Activated CD4-positive, alpha-beta T cell treated with anti-CD3 and anti-CD28 coated beads, Interleukin-2, amount 10 ng/mL, durations not matched to agents 7 days and 5 days (primary cell): ENCODE measurements at regions of chr12 and their contacts with region 1.

Region 1: DNA sequence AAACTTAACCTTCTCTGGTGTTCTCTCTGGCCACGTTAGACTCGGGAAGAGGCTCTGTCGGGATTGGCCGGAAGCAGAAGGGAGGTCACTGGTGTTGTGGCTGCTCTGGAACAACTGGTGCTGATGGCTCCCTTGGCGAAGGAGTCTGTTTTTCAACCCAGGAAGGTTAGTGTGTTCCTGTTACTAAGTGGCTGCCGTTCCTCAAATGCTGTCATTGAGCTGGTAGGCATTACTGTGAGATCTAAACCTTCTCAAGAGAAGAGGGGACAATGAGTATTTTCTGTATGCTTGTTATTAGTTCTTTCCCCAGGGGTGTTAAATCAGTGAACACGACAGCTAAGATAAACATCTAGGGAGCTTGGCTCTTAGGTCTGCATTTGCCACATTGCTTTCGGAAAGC is 18.3 kb downstream of the POP5 start:
- DNase-seq: no peak
- H3K4me3 Mint-ChIP-seq: no peak overlapping the region
- H3K27ac Mint-ChIP-seq: no peak overlapping the region
- H3K4me1 Mint-ChIP-seq: no peaks in the 10 kb centered on the region
- H3K27me3 Mint-ChIP-seq: no peaks in the 10 kb centered on the region

Region 2: DNA sequence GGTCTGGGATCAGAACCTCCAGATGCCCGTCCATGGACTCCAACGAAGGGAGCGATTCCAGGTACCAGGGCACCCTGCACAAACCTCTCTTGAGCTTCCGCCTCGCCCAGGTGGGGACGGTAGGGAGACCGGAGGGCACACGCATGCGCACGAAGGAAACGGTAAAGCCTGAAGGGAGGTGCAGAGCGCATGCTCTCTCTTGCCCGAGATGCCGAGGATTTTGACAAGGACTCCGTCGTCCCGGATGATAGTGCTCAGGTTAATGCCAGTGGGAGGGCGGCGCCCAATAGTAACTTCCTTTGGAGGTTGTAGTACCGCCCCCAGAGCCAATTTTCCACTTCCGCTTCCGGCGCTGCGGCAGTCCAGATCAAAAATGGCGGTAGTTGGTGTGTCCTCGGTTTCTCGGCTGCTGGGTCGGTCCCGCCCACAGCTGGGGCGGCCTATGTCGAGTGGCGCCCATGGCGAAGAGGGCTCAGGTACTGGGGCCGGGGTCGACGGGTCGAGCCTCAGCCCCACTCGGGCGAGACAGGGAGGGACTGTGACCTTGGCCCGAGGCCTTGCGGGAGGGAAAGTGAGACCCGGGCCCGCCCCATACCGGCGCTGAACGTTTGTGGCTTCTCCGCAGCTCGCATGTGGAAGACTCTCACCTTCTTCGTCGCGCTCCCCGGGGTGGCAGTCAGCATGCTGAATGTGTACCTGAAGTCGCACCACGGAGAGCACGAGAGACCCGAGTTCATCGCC is 125.0 kb before region 1 on chr12 and contains the start of gene COX6A1:
- CTCF ChIA-PET with region 1: no interaction called
- POLR2A ChIA-PET with region 1: no interaction called
- DNase-seq: peak; percentile 99
- H3K4me3 Mint-ChIP-seq: peak within 1 kb of the TSS; percentile 98
- H3K27ac Mint-ChIP-seq: peak within 1 kb of the TSS; percentile 97
- H3K4me1 Mint-ChIP-seq: peaks cover 31% of the 10 kb centered on the region
- H3K27me3 Mint-ChIP-seq: no peaks in the 10 kb centered on the region
- total RNA-seq, gene COX6A1: 323 to 355 TPM

Region 3: DNA sequence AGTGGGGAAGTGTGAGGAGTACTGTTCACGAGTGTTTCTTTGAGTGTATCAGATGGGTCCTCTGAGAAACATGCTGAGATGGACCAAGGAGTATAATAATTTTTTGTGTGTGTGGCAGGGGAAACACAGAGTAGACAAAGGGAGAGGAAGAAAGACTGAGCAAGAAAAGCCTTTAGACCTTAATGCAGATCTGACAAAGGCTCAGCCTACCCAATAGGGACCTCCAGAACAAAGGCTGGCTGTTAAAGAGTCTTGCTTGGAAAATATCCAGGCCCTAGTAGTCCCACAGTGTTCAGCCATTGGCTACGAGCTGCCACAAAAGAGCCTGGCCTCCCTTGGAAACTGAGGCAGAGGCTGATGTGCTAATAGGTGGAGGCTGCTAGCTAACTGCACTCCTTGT is 47.4 kb before region 1 on chr12:
- CTCF ChIA-PET with region 1: no interaction called
- POLR2A ChIA-PET with region 1: no interaction called
- DNase-seq: no peak
- H3K4me3 Mint-ChIP-seq: no peak overlapping the region
- H3K27ac Mint-ChIP-seq: no peak overlapping the region
- H3K4me1 Mint-ChIP-seq: no peaks in the 10 kb centered on the region
- H3K27me3 Mint-ChIP-seq: no peaks in the 10 kb centered on the region

Region 4: DNA sequence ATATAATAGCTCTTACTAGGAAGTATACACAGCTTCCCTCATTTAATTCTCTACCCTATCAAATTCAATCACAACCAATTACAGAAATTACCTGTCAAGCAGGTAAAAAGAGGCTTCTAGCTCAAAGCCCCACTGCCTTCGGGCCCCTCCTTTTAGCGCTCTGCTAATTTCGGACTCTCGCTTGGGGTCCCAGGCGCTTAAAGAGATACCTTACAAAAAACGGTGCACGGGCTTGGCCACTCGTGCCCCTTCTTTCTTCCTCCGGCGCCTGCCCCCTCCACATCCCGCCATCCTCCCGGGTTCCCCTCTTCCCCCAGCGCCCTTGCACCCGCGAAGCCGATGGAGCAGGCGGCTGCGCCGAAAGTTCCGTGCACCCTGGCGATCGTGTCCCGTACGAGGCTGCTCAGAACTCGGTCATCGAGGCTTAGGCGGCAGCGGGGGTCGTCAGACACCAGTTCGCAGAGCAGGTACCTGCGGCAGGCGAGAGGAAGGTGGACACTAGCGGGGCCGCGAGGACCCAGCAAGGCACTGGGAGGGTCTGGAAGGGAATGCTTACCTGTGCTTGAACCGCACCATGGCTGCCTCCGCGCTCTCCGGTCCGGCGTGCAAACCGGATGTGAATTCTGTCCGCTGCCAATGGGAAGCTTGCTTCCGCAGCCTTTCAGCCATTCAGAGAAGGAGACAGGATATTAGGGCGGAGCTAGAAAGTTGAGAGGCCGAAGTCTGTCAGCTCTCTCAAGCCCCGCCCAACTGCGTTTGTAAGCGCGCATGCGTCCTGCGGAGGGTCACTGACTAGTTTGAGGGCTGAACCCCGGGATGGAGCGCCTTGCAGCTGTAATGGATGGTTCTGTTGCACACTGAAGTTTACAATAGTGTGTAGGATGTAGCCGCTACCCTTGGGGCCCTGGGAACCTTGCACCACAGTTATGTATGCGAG is 18.1 kb after region 1 on chr12 and contains the start of gene POP5:
- CTCF ChIA-PET with region 1: interaction called, 10 read pairs
- POLR2A ChIA-PET with region 1: interaction called, 4 read pairs
- DNase-seq: peak; percentile 97
- H3K4me3 Mint-ChIP-seq: peak within 1 kb of the TSS; percentile 98
- H3K27ac Mint-ChIP-seq: peak within 1 kb of the TSS; percentile 93
- H3K4me1 Mint-ChIP-seq: peaks cover 43% of the 10 kb centered on the region
- H3K27me3 Mint-ChIP-seq: peaks cover 21% of the 10 kb centered on the region
- total RNA-seq, gene POP5: 60.8 to 64.7 TPM